ENCODE measurements at regions of chr1 and their contacts with region 1.

Region 1: GRCh38 chr1:84973498-84974334 is 23.2 kb downstream of the MCOLN2 start:
- DNase-seq: no peak
- ATAC-seq: peak; percentile 54
- H3K4me3 ChIP-seq: peak overlapping the region; percentile 60
- H3K27ac ChIP-seq: peak overlapping the region; percentile 85
- H3K4me1 ChIP-seq: peaks cover 56% of the 10 kb centered on the region
- H3K27me3 ChIP-seq: no peaks in the 10 kb centered on the region
- CTCF ChIP-seq: peak in 1 of 3 experiments; percentile 31; a peak in 2 of 6 replicates
- EP300 ChIP-seq: no peak
- POLR2A ChIP-seq: no peak
- RAD21 ChIP-seq: peak; percentile 41; the same call in 1 of the 2 replicates

Region 2: DNA sequence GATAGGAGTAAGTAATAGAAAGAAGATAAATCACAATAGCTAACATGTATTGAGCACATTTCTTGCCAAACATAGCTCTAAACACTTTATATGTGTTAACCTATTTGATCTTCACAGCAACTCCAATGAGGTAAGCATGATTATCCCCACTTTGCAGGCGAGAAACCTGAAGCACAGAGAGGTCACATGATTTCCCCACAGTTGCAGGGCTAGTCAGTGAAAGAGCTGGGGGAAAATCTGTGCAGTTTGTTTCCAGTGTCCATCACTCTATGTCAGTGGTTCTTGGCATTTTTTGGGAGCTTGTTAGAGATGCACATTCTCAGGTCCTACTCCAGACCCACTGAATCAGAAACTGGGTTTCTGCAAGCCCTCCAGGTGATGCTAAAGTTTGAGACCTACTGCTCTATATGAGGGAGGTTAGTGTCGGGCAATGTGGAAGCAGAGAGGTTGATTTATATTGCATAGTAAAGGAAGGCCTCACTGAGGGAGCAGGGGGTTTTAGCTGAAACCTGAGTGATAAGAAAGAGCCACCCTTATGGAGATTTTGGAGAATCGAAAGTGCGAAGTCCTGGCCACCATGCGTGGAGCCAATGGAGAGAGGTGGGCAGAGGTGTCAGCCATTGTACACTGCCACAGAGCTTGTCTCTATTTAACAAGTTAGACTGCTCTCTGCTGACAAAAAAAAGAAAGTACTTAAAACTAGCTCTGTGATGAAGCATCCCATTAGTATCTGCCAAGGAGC is 53.7 kb after region 1 on chr1:
- CTCF ChIA-PET with region 1: interaction called, 20 read pairs
- POLR2A ChIA-PET with region 1: interaction called, 9 read pairs
- RAD21 ChIA-PET with region 1: interaction called, 21 read pairs
- SMC1A ChIA-PET with region 1: interaction called, 24 read pairs
- in situ Hi-C with region 1: no loop called
- intact Hi-C with region 1: no loop called
- DNase-seq: no peak
- ATAC-seq: peak; percentile 96
- H3K4me3 ChIP-seq: no peak overlapping the region
- H3K27ac ChIP-seq: no peak overlapping the region
- H3K4me1 ChIP-seq: no peaks in the 10 kb centered on the region
- H3K27me3 ChIP-seq: no peaks in the 10 kb centered on the region
- CTCF ChIP-seq: peak; percentile 31 to 62 (median 33); a peak in 4 of 6 replicates
- EP300 ChIP-seq: no peak
- POLR2A ChIP-seq: no peak
- RAD21 ChIP-seq: peak; percentile 72